Activated CD4-positive, alpha-beta T cell treated with anti-CD3 and anti-CD28 coated beads, Interleukin-2, amount 10 ng/mL, durations not matched to agents 7 days and 5 days (primary cell): ENCODE measurements at regions of chr1 and their contacts with region 1.

Region 1: DNA sequence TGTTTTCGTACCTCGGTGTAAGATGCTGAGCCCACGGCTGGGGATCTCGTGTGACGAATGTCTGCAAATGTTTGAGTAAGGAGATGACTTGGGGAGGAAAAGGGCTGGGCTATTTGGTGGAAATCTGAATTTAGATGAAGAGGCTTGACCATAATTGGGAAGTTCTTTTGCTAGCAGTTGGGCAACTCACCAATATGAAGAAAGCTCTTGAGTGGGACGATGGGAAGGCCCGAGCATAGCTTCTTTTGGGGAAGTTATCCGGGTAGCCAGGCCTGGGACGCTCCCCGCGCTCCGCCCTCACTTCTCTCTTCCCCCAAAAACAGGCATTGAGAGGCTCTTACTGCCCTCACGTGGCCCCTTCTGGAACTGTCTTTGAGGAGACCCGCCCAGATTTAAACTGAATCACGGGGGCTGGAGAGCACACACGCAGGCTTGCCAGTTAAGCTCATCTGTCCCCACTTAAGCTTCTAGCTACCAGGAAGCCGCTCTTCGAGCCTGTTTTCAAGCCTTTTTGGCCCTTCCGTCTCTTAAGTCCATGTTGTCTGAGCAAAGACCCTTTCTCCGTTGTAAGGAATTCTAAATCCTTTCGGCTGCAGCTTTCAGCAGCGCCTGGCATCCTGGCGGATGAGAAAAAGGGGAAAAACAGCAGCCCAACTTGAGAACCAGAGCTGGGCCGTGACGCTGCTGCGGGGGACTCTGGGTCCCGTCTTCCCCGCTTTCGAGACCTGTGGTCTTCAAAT is 93.1 kb downstream of the NID1 start:
- DNase-seq: peak; percentile 90
- H3K4me3 Mint-ChIP-seq: peak overlapping the region; percentile 55
- H3K27ac Mint-ChIP-seq: peak overlapping the region; percentile 88
- H3K4me1 Mint-ChIP-seq: peaks cover 19% of the 10 kb centered on the region
- H3K27me3 Mint-ChIP-seq: peaks cover 8% of the 10 kb centered on the region

Region 2: DNA sequence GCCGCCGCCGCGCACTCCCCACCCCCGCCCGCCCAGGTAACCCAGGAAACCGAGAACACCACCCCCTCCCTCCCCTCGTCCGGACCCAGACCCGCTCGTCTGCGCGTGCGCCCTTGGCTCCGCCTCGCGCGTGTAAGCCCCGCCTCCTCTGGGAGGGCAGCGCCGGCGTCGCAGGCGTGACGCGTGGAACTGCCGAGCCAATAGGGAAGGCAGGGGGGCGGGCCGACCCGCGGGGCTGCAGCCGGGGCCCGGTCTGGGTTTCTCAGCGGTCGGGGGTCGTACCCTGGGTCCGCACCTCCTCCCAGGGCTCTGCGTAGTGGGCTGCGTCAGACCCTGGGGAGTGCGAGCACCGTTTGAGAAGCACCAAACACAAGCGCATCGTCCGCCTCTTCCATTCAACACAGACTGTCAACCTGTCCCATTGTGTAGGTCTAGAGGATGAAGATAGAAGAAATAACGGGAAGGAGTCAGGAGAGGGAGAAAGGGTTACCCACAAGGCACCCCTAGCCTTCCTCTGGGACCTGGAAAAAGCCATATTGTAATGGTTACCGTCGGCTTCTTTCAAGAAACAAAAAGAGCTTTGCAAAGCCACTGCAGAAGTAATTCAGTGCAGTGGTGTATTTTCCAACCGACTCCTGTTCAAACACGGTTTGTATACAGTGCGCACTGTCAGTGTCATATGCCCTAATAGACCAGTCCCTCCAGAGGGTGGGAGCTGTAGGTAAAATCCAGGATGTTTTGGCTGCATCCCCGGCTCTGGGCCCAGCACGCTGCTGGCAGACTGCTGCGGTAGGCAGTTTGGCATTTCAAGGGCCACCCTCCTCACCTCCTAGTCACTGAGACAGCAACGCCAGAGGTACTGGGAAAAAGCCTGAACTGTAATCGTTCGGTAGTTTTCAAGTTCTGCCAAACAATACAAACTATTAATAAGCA is 104.6 kb before region 1 on chr1:
- CTCF ChIA-PET with region 1: interaction called, 11 read pairs
- POLR2A ChIA-PET with region 1: no interaction called
- DNase-seq: peak; percentile 97
- H3K4me3 Mint-ChIP-seq: peak overlapping the region; percentile 92
- H3K27ac Mint-ChIP-seq: peak overlapping the region; percentile 97
- H3K4me1 Mint-ChIP-seq: peaks cover 48% of the 10 kb centered on the region
- H3K27me3 Mint-ChIP-seq: no peaks in the 10 kb centered on the region

Region 3: GRCh38 chr1:235941876-235942624 is 29.7 kb before region 1 on chr1:
- CTCF ChIA-PET with region 1: interaction called, 11 read pairs
- POLR2A ChIA-PET with region 1: no interaction called
- DNase-seq: no peak
- H3K4me3 Mint-ChIP-seq: no peak overlapping the region
- H3K27ac Mint-ChIP-seq: no peak overlapping the region
- H3K4me1 Mint-ChIP-seq: peaks cover 30% of the 10 kb centered on the region
- H3K27me3 Mint-ChIP-seq: no peaks in the 10 kb centered on the region

Region 4: GRCh38 chr1:235954306-235955283 is 17.1 kb before region 1 on chr1:
- CTCF ChIA-PET with region 1: interaction called, 67 read pairs
- POLR2A ChIA-PET with region 1: no interaction called
- DNase-seq: peak; percentile 46
- H3K4me3 Mint-ChIP-seq: no peak overlapping the region
- H3K27ac Mint-ChIP-seq: peak overlapping the region; percentile 27
- H3K4me1 Mint-ChIP-seq: peaks cover 36% of the 10 kb centered on the region
- H3K27me3 Mint-ChIP-seq: no peaks in the 10 kb centered on the region

Region 5: GRCh38 chr1:235984041-235984825 is 12.5 kb after region 1 on chr1:
- CTCF ChIA-PET with region 1: interaction called, 24 read pairs
- POLR2A ChIA-PET with region 1: no interaction called
- DNase-seq: no peak
- H3K4me3 Mint-ChIP-seq: no peak overlapping the region
- H3K27ac Mint-ChIP-seq: no peak overlapping the region
- H3K4me1 Mint-ChIP-seq: no peaks in the 10 kb centered on the region
- H3K27me3 Mint-ChIP-seq: peaks cover 15% of the 10 kb centered on the region

Region 6: GRCh38 chr1:235996048-235996785 is 24.5 kb after region 1 on chr1:
- CTCF ChIA-PET with region 1: interaction called, 11 read pairs
- POLR2A ChIA-PET with region 1: interaction called, 3 read pairs
- DNase-seq: no peak
- H3K4me3 Mint-ChIP-seq: no peak overlapping the region
- H3K27ac Mint-ChIP-seq: no peak overlapping the region
- H3K4me1 Mint-ChIP-seq: peaks cover 52% of the 10 kb centered on the region
- H3K27me3 Mint-ChIP-seq: no peaks in the 10 kb centered on the region

Region 7: DNA sequence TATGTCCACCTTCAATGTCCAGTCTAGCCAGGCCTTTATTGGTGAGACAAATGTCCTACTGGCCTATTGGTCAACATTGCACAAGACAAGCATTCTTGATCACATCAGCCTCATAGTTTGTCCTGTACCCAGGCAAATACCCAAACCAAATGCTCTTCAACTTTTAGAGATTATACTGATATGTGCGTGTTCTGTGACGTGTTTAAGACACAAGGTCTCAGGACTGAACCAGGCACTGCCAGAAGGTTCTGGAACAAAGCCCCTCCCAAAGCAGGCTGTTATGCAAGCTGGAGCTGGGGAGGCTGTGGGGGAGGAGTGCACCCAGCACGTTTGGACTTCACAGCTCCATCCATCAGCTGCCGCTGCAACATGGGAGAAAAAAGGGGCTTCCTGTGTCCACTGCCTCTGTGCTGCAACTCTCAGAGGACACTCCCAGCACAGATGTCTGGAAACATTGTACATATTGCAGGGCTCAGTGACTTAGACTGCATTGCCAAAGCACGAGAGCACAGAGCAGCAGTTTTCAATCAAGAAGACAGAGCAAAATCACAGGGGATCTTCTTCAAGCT is 47.2 kb after region 1 on chr1:
- CTCF ChIA-PET with region 1: no interaction called
- POLR2A ChIA-PET with region 1: no interaction called
- DNase-seq: no peak
- H3K4me3 Mint-ChIP-seq: no peak overlapping the region
- H3K27ac Mint-ChIP-seq: no peak overlapping the region
- H3K4me1 Mint-ChIP-seq: no peaks in the 10 kb centered on the region
- H3K27me3 Mint-ChIP-seq: peaks cover 10% of the 10 kb centered on the region